Activated CD4-positive, alpha-beta T cell treated with anti-CD3 and anti-CD28 coated beads, Interleukin-2, amount 10 ng/mL, durations not matched to agents 7 days and 5 days (primary cell): ENCODE measurements at regions of chr17 and their contacts with region 1.

Region 1: GRCh38 chr17:70204431-70204830 is 35.1 kb downstream of the KCNJ2 start:
- DNase-seq: no peak
- H3K4me3 Mint-ChIP-seq: no peak overlapping the region
- H3K27ac Mint-ChIP-seq: no peak overlapping the region
- H3K4me1 Mint-ChIP-seq: no peaks in the 10 kb centered on the region
- H3K27me3 Mint-ChIP-seq: no peaks in the 10 kb centered on the region

Region 2: GRCh38 chr17:69470702-69471101 is 733.7 kb before region 1 on chr17:
- CTCF ChIA-PET with region 1: no interaction called
- POLR2A ChIA-PET with region 1: interaction called, 13 read pairs
- DNase-seq: no peak
- H3K4me3 Mint-ChIP-seq: no peak overlapping the region
- H3K27ac Mint-ChIP-seq: no peak overlapping the region
- H3K4me1 Mint-ChIP-seq: no peaks in the 10 kb centered on the region
- H3K27me3 Mint-ChIP-seq: no peaks in the 10 kb centered on the region